CD8-positive, alpha-beta T cell (primary cell): ENCODE measurements at regions of chr2 and their contacts with region 1.

Region 1: DNA sequence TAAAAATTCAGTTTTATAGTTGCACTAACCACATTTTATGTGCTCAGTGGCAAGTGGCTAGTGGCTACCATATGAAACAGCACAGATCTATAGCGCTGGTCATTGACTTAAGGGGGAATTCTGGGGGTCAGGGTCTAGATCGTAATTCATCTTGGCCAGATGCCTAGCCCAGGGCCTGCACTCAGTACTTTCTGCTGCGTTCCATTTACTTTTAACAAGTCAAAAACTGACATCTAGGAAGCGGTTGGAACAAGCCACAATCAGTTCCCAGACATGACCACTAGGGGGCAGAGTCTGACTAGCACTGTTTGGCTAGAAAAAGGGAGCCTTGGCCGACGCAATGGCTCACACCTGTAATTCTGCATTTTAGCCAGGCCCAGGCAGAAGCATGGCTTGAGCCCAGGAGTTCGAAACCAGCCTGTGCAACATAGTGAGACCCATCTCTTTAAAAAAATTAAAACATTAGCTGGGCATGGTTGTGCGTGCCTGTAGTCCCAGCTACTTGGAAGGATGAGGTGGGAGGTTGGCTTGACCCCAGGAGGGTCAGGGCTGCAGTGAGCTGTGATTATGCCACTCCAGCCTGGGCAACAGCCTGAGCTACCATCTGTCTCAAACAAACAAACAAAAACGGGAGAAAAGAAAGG is 9.0 kb upstream of the TMBIM1 start:
- DNase-seq: peak; percentile 78 to 93 (median 89)
- ATAC-seq: peak; percentile 98
- H3K4me3 ChIP-seq: no peak overlapping the region
- H3K4me3 Mint-ChIP-seq: no peak overlapping the region
- H3K27ac ChIP-seq: no peak overlapping the region
- H3K27ac Mint-ChIP-seq: no peak overlapping the region
- H3K4me1 ChIP-seq: no peaks in the 10 kb centered on the region
- H3K4me1 Mint-ChIP-seq: peaks cover 6% of the 10 kb centered on the region
- H3K27me3 ChIP-seq: no peaks in the 10 kb centered on the region
- H3K27me3 Mint-ChIP-seq: no peaks in the 10 kb centered on the region
- CTCF ChIP-seq: peak; percentile 83

Region 2: GRCh38 chr2:218286570-218287459 is 14.5 kb before region 1 on chr2:
- CTCF ChIA-PET with region 1: interaction called, 15 read pairs
- POLR2A ChIA-PET with region 1: no interaction called
- intact Hi-C with region 1: loop called in 1 of 2 experiments (anchors 1 kb)
- DNase-seq: peak; percentile 56 to 97 (median 80)
- ATAC-seq: peak; percentile 62
- H3K4me3 ChIP-seq: peak overlapping the region; percentile 51 to 60
- H3K4me3 Mint-ChIP-seq: peak overlapping the region; percentile 90
- H3K27ac ChIP-seq: peak overlapping the region; percentile 87 to 99
- H3K27ac Mint-ChIP-seq: peak overlapping the region; percentile 100
- H3K4me1 ChIP-seq: peaks cover 93% of the 10 kb centered on the region
- H3K4me1 Mint-ChIP-seq: peaks cover 78% of the 10 kb centered on the region
- H3K27me3 ChIP-seq: no peaks in the 10 kb centered on the region
- H3K27me3 Mint-ChIP-seq: no peaks in the 10 kb centered on the region
- CTCF ChIP-seq: no peak

Region 3: GRCh38 chr2:218312267-218312756 is 11.0 kb after region 1 on chr2:
- CTCF ChIA-PET with region 1: interaction called, 33 read pairs
- POLR2A ChIA-PET with region 1: interaction called, 3 read pairs
- intact Hi-C with region 1: no loop called
- DNase-seq: no peak
- ATAC-seq: no peak
- H3K4me3 ChIP-seq: no peak overlapping the region
- H3K4me3 Mint-ChIP-seq: no peak overlapping the region
- H3K27ac ChIP-seq: no peak overlapping the region
- H3K27ac Mint-ChIP-seq: peak overlapping the region; percentile 55
- H3K4me1 ChIP-seq: peaks cover 20% of the 10 kb centered on the region
- H3K4me1 Mint-ChIP-seq: peaks cover 29% of the 10 kb centered on the region
- H3K27me3 ChIP-seq: no peaks in the 10 kb centered on the region
- H3K27me3 Mint-ChIP-seq: no peaks in the 10 kb centered on the region
- CTCF ChIP-seq: no peak

Region 4: GRCh38 chr2:218322895-218323808 is 21.9 kb after region 1 on chr2:
- CTCF ChIA-PET with region 1: interaction called, 33 read pairs
- POLR2A ChIA-PET with region 1: interaction called, 3 read pairs
- intact Hi-C with region 1: loop called in 1 of 2 experiments (anchors 1 kb)
- DNase-seq: peak; percentile 9 to 71 (median 45)
- ATAC-seq: peak; percentile 70
- H3K4me3 ChIP-seq: peak overlapping the region; percentile 39 to 48
- H3K4me3 Mint-ChIP-seq: peak overlapping the region; percentile 86
- H3K27ac ChIP-seq: peak overlapping the region in 1 of 2 experiments; percentile 48
- H3K27ac Mint-ChIP-seq: peak overlapping the region; percentile 77
- H3K4me1 ChIP-seq: peaks cover 47% of the 10 kb centered on the region
- H3K4me1 Mint-ChIP-seq: peaks cover 56% of the 10 kb centered on the region
- H3K27me3 ChIP-seq: peaks cover 0 to 3% of the 10 kb centered on the region in 2 experiments
- H3K27me3 Mint-ChIP-seq: peaks cover 4% of the 10 kb centered on the region
- CTCF ChIP-seq: no peak

Region 5: GRCh38 chr2:218343591-218343990 is 42.3 kb after region 1 on chr2:
- CTCF ChIA-PET with region 1: interaction called, 17 read pairs
- POLR2A ChIA-PET with region 1: no interaction called
- intact Hi-C with region 1: no loop called
- DNase-seq: no peak
- ATAC-seq: no peak
- H3K4me3 ChIP-seq: no peak overlapping the region
- H3K4me3 Mint-ChIP-seq: no peak overlapping the region
- H3K27ac ChIP-seq: no peak overlapping the region
- H3K27ac Mint-ChIP-seq: no peak overlapping the region
- H3K4me1 ChIP-seq: no peaks in the 10 kb centered on the region
- H3K4me1 Mint-ChIP-seq: no peaks in the 10 kb centered on the region
- H3K27me3 ChIP-seq: no peaks in the 10 kb centered on the region
- H3K27me3 Mint-ChIP-seq: no peaks in the 10 kb centered on the region
- CTCF ChIP-seq: no peak

Region 6: DNA sequence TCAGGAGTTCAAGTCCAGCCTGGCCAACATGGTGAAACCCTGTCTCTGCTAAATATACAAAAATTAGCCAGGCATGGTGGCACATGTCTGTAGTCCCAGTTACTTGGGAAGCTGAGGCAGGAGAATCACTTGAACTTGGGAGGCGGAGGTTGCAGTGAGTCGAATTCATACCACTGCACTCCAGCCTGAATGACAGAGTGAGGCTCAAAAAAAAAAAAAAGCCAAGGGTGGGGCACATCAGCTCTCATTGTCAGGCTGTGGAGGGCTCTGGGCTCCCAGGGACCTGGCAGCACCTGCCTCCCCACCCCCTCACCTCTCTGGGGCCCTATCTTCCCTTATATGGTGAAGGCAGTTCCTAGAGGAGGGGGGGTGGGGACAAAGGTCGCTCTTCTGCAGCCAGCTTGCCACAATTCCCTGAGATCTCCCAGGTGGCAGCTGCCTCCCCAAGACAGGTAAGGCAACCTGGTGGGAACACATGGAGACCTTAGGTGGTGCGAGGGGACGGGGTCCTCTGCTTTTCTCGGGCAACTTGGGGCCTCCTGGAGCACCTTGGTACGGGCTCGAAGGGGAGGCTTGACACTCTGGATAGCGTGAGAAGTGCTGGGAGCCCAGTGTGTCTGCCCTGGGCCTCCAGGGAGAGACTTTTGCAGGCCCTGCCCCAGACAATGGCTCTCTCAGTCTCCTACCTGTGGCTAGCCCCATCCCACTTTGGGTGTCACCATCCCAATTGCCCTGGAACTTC is 117.6 kb after region 1 on chr2 and contains the start of gene VIL1:
- CTCF ChIA-PET with region 1: no interaction called
- POLR2A ChIA-PET with region 1: no interaction called
- intact Hi-C with region 1: no loop called
- DNase-seq: no peak
- ATAC-seq: no peak
- H3K4me3 ChIP-seq: no peak within 1 kb of the TSS
- H3K4me3 Mint-ChIP-seq: no peak within 1 kb of the TSS
- H3K27ac ChIP-seq: no peak within 1 kb of the TSS
- H3K27ac Mint-ChIP-seq: no peak within 1 kb of the TSS
- H3K4me1 ChIP-seq: no peaks in the 10 kb centered on the region
- H3K4me1 Mint-ChIP-seq: no peaks in the 10 kb centered on the region
- H3K27me3 ChIP-seq: peaks cover 0 to 3% of the 10 kb centered on the region in 2 experiments
- H3K27me3 Mint-ChIP-seq: no peaks in the 10 kb centered on the region
- CTCF ChIP-seq: no peak
- total RNA-seq, gene VIL1: 0.19 to 0.65 TPM

Region 7: GRCh38 chr2:218438601-218438995 is 137.3 kb after region 1 on chr2:
- CTCF ChIA-PET with region 1: no interaction called
- POLR2A ChIA-PET with region 1: no interaction called
- intact Hi-C with region 1: no loop called
- DNase-seq: no peak
- ATAC-seq: no peak
- H3K4me3 ChIP-seq: no peak overlapping the region
- H3K4me3 Mint-ChIP-seq: no peak overlapping the region
- H3K27ac ChIP-seq: no peak overlapping the region
- H3K27ac Mint-ChIP-seq: no peak overlapping the region
- H3K4me1 ChIP-seq: no peaks in the 10 kb centered on the region
- H3K4me1 Mint-ChIP-seq: no peaks in the 10 kb centered on the region
- H3K27me3 ChIP-seq: no peaks in the 10 kb centered on the region
- H3K27me3 Mint-ChIP-seq: no peaks in the 10 kb centered on the region
- CTCF ChIP-seq: no peak

Region 8: GRCh38 chr2:218466016-218466521 is 164.8 kb after region 1 on chr2:
- CTCF ChIA-PET with region 1: interaction called, 3 read pairs
- POLR2A ChIA-PET with region 1: no interaction called
- intact Hi-C with region 1: loop called (anchors 1 to 5 kb)
- DNase-seq: peak in 2 of 9 experiments; percentile 21 to 46
- ATAC-seq: peak; percentile 26
- H3K4me3 ChIP-seq: no peak overlapping the region
- H3K4me3 Mint-ChIP-seq: no peak overlapping the region
- H3K27ac ChIP-seq: no peak overlapping the region
- H3K27ac Mint-ChIP-seq: no peak overlapping the region
- H3K4me1 ChIP-seq: no peaks in the 10 kb centered on the region
- H3K4me1 Mint-ChIP-seq: peaks cover 11% of the 10 kb centered on the region
- H3K27me3 ChIP-seq: no peaks in the 10 kb centered on the region
- H3K27me3 Mint-ChIP-seq: no peaks in the 10 kb centered on the region
- CTCF ChIP-seq: peak; percentile 52